ENCODE measurements at regions of chr5 and their contacts with region 1.

Region 1: GRCh38 chr5:270340-270739 is 1.1 kb upstream of the PDCD6 start:
- DNase-seq: no peak
- H3K4me3 ChIP-seq: no peak overlapping the region
- H3K27ac ChIP-seq: no peak overlapping the region
- H3K4me1 ChIP-seq: peaks cover 12% of the 10 kb centered on the region
- H3K27me3 ChIP-seq: no peaks in the 10 kb centered on the region
- CTCF ChIP-seq: no peak
- POLR2A ChIP-seq: no peak

Region 2: GRCh38 chr5:217860-218456 is 52.4 kb before region 1 on chr5 and contains the starts of genes CCDC127 and SDHA:
- CTCF ChIA-PET with region 1: interaction called, 3 read pairs
- POLR2A ChIA-PET with region 1: interaction called, 3 read pairs
- dilution Hi-C with region 1: no loop called
- intact Hi-C with region 1: loop called (anchors 1 kb)
- DNase-seq: peak; percentile 97
- H3K4me3 ChIP-seq: peak within 1 kb of the TSS; percentile 86 to 95 (median 94)
- H3K27ac ChIP-seq: peak within 1 kb of the TSS; percentile 70
- H3K4me1 ChIP-seq: peaks cover 37% of the 10 kb centered on the region
- H3K27me3 ChIP-seq: no peaks in the 10 kb centered on the region
- CTCF ChIP-seq: peak; percentile 29 to 56
- POLR2A ChIP-seq: peak; percentile 65
- total RNA-seq, gene CCDC127: 5.3 and 6.3 TPM in 2 replicates
- total RNA-seq, gene SDHA: 142 and 153 TPM in 2 replicates

Region 3: GRCh38 chr5:247551-248249 is 22.6 kb before region 1 on chr5:
- CTCF ChIA-PET with region 1: no interaction called
- POLR2A ChIA-PET with region 1: no interaction called
- dilution Hi-C with region 1: no loop called
- intact Hi-C with region 1: loop called (anchors 2 kb)
- DNase-seq: no peak
- H3K4me3 ChIP-seq: no peak overlapping the region
- H3K27ac ChIP-seq: no peak overlapping the region
- H3K4me1 ChIP-seq: peaks cover 31% of the 10 kb centered on the region
- H3K27me3 ChIP-seq: no peaks in the 10 kb centered on the region
- CTCF ChIP-seq: no peak
- POLR2A ChIP-seq: no peak

Region 4: DNA sequence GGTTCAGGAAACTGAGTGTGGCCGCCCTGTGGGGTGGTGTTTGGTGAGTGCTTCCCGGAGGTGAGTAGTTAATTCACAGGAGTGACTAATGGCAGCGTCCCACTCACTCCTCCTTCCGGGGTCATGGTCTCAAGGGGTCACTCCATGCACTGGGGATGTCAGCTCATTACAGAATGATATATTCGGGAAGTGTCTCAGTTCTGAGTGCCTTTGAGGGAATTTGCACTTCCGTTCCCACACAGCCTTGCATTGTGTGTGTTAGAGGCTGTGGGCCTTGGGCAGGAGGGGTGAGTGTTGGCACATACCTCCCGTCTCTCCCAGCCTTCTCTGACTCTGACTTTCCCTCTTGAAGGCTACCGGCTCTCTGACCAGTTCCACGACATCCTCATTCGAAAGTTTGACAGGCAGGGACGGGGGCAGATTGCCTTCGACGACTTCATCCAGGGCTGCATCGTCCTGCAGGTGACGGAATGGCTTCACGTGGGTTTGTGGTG is 40.6 kb after region 1 on chr5:
- CTCF ChIA-PET with region 1: no interaction called
- POLR2A ChIA-PET with region 1: no interaction called
- dilution Hi-C with region 1: no loop called
- intact Hi-C with region 1: loop called (anchors 2 kb)
- DNase-seq: peak; percentile 88
- H3K4me3 ChIP-seq: no peak overlapping the region
- H3K27ac ChIP-seq: peak overlapping the region; percentile 88
- H3K4me1 ChIP-seq: peaks cover 17% of the 10 kb centered on the region
- H3K27me3 ChIP-seq: no peaks in the 10 kb centered on the region
- CTCF ChIP-seq: no peak
- POLR2A ChIP-seq: no peak

Region 5: GRCh38 chr5:442335-443238 is 172.2 kb after region 1 on chr5 and contains the start of gene EXOC3:
- CTCF ChIA-PET with region 1: no interaction called
- POLR2A ChIA-PET with region 1: no interaction called
- dilution Hi-C with region 1: no loop called
- intact Hi-C with region 1: no loop called
- DNase-seq: peak; percentile 50
- H3K4me3 ChIP-seq: peak within 1 kb of the TSS; percentile 5 to 92 (median 59)
- H3K27ac ChIP-seq: peak within 1 kb of the TSS; percentile 47
- H3K4me1 ChIP-seq: peaks cover 10% of the 10 kb centered on the region
- H3K27me3 ChIP-seq: no peaks in the 10 kb centered on the region
- CTCF ChIP-seq: no peak
- POLR2A ChIP-seq: peak; percentile 84
- total RNA-seq, gene EXOC3: 52.9 and 55.4 TPM in 2 replicates

Measured in endothelial cell of umbilical vein (primary cell).